Body of pancreas (tissue), 4 donors: ENCODE measurements at regions of chr2 and their contacts with region 1.

Region 1: DNA sequence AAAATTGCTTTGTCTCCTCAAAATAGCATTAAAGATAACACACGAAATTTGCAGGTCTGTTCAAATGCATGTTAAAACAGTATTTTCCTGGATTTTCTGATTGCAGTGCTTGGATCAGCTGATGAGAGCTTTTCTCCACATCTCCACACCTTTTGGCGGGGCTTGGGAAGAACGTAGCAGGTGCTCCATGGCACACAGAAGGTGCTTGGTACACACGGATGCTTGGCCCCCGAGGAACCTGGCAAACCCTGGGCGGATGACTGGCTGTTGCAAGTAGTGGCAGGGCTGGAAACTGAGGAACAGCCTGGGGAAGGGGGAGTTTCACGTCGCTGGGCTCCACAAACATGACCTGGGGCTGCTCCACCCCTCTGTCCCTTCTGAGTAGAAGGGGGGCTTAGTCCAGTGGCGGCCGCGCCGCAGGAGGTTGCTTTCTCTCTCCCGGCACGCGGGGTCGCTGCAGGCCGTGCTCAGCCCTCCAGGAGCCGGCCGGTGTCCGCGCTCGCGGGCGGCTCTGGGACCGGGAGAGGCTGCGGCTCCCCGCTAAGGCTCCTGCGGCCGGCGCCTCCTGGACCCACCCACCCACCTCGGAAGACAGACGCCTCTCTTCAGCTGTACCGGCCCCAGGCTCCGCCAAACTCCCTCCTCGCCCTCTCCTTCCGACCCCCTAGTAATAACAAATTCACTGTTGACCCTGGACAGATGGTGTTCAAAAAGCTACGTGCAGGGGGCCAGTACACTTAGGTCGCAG is 69.3 kb downstream of the MARCO start:
- DNase-seq: peak; percentile 44 to 70 (median 62)
- ATAC-seq: peak; percentile 86
- H3K4me3 ChIP-seq: no peak overlapping the region
- H3K27ac ChIP-seq: no peak overlapping the region
- H3K4me1 ChIP-seq: peaks cover 7% of the 10 kb centered on the region
- H3K27me3 ChIP-seq: no peaks in the 10 kb centered on the region
- CTCF ChIP-seq: peak; percentile 41 to 80 (median 65)
- POLR2A ChIP-seq: no peak

Region 2: DNA sequence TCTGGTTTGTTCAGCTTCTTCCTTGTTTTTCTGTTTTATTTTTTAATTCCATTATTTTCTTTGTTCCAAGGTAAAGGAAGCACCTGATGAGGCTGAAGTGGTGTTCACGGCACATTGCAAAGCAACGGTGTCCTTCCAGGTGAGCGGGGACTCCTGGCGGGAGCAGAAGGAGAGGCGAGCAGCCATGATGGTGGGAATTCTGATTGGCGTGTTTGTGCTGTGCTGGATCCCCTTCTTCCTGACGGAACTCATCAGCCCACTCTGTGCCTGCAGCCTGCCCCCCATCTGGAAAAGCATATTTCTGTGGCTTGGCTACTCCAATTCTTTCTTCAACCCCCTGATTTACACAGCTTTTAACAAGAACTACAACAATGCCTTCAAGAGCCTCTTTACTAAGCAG is 1108.4 kb before region 1 on chr2:
- intact Hi-C with region 1: no loop called
- DNase-seq: no peak
- ATAC-seq: no peak
- H3K4me3 ChIP-seq: no peak overlapping the region
- H3K27ac ChIP-seq: no peak overlapping the region
- H3K4me1 ChIP-seq: no peaks in the 10 kb centered on the region
- H3K27me3 ChIP-seq: no peaks in the 10 kb centered on the region
- CTCF ChIP-seq: no peak
- POLR2A ChIP-seq: no peak

Region 3: DNA sequence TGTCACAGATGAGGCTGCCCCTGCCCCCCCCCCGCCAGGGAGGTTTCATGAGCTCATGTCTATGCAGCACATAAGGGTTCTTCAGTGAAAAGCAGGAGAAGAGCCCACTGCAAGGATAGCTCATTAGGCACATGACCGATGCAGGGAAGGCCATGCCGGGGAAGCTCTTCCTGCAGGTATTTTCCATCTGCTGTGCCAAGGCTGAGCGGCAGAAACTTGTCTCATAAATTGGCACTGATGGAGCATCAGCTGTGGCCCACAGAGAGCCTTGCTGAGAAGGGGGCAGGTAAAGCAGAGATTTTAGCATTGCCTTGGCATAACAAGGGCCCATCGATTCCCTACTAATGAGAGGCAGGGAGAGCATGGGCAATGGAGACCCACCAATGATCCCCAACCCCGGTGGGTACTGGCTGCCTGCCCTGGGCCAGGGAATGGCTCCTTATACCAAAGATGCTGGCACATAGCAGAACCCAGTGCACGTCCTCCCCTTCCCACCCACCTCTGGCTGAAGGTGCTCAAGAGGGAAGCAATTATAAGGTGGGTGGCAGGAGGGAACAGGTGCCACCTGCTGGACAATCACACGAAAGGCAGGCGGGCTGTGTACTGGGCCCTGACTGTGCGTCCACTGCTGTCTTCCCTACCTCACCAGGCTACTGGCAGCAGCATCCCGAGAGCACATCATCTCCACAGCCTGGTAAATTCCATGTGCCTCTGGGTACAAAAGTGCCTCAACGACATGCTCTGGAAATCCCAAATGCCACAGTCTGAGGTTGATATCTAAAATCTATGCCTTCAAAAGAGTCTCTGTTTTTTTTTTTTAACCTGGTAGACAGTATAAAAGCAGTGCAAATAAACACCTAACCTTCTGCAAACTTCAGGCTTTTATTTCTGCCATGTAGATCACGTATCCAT is 253.7 kb after region 1 on chr2:
- intact Hi-C with region 1: loop called (anchors 10 kb)
- DNase-seq: peak; percentile 55 to 66 (median 60)
- ATAC-seq: peak; percentile 87
- H3K4me3 ChIP-seq: no peak overlapping the region
- H3K27ac ChIP-seq: no peak overlapping the region
- H3K4me1 ChIP-seq: no peaks in the 10 kb centered on the region
- H3K27me3 ChIP-seq: no peaks in the 10 kb centered on the region
- CTCF ChIP-seq: peak; percentile 53 to 81 (median 75)
- POLR2A ChIP-seq: no peak

Region 4: DNA sequence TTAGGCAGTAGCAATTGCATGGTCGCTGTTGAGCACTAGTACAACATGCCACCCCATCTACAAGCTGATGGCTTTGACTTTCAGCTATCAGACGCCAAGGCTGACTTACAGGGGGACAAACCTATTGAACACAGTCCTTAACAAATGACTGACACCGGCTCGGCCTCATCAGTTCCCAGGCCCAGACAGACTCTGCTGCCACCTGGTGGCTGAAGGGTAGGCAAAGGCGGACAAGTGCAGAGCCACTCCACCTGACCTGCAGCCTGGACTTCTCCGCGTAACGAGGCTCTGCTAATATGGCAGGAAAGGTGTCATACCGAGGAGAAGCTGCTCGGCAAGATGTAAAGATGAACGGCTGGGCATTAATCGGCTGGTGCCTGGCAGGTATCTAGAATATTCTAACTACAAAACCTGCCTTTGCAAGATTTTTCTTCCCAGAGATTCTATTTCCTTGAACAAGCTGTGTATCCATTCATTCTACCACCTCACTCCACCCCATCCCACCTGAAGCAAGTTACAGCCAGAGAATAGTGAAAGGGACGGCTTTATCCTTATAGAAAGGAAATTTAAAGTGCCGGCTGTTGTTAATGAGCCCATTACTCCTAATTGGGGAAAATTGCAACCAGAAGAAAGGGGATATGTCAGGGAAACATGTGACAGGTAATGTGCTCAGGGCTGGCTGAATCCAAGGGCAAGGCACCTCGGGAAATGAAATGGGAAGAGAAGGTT is 279.7 kb after region 1 on chr2:
- intact Hi-C with region 1: loop called (anchors 5 kb)
- DNase-seq: peak; percentile 72 to 89 (median 80)
- ATAC-seq: peak; percentile 77
- H3K4me3 ChIP-seq: no peak overlapping the region
- H3K27ac ChIP-seq: no peak overlapping the region
- H3K4me1 ChIP-seq: peaks cover 13% of the 10 kb centered on the region
- H3K27me3 ChIP-seq: no peaks in the 10 kb centered on the region
- CTCF ChIP-seq: peak; percentile 52 to 85 (median 79)
- POLR2A ChIP-seq: no peak